ENCODE measurements at regions of chr3 and their contacts with region 1.

Region 1: DNA sequence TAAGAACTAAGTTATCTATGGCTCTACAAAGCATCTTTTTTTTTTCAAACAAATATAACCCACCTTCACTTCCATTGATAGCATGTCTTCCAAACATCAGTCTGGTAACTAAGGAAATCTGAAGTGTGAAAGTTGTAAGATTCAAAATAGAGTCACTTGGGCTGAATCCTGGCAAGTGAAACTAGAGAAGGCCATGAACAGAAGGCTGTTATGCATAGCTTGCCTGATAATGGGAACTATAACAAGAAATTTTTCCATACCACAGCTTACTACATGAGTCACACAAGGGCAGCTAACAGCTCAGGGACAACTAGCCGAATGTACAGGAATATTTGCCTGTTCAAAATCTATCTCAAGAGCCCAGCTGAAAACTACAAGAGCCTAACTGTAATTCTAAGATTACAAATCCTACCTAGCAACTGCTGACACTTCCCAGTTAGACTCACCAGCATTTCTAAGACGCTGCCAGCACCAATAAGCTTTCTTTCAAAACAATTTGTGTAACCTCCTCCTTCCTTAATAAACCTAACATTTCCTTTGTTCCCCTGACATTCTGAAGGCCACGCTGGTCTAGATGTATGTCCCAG is 1066.5 kb downstream of the PLOD2 start:
- DNase-seq: no peak
- ATAC-seq: no peak

Region 2: DNA sequence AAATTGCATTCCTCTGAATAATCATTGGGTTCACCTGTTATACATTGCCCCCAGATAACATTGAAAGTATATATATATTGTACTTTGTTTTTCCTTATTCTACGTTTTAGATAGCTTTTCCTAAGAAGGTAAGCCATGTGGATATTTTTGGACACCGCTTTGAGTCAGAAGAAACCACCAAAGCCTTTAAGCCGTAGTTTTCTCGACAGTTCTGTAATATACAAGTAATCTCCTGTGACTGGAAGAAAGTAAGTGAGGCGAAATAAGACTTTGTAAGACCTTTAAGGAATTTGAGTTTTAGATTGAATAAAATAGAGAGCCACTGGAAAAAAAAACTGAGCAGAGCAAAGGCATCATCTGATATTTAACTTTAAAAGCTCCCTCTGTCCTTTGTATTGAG is 30.8 kb before region 1 on chr3:
- intact Hi-C with region 1: loop called (anchors 1 kb)
- DNase-seq: no peak
- ATAC-seq: no peak

Region 3: GRCh38 chr3:145355175-145355574 is 260.7 kb after region 1 on chr3:
- intact Hi-C with region 1: no loop called
- DNase-seq: no peak
- ATAC-seq: no peak